ENCODE measurements at regions of chr17 and their contacts with region 1.

Region 1: DNA sequence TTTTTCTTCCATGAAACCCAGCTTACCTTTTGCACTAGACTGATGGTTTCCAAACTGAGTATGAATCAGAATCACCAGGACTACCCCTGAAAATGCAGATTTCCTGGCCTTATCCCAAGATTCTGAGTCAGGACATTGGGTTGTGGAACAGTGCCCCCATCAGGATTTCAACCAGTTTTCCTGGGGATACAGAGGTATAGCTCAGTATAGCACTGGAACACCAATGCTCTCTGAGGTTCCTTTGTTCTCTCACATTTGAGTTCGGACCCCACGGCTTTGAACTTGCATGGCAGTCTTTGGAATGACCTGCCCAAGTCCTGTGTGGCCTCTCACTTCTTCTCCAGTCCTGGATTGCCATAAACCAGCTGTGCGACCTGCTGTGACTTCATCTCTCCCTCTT is 12.8 kb upstream of the CCL8 start:
- DNase-seq: no peak
- ATAC-seq: peak; percentile 80 to 90
- H3K4me3 ChIP-seq: no peak overlapping the region
- H3K27ac ChIP-seq: no peak overlapping the region
- H3K4me1 ChIP-seq: peaks cover 2% of the 10 kb centered on the region
- H3K27me3 ChIP-seq: no peaks in the 10 kb centered on the region

Region 2: GRCh38 chr17:34199932-34200534 is 106.4 kb before region 1 on chr17:
- intact Hi-C with region 1: loop called (anchors 2 to 5 kb)
- DNase-seq: peak; percentile 56 to 77 (median 66)
- ATAC-seq: peak; percentile 93 to 94
- H3K4me3 ChIP-seq: no peak overlapping the region
- H3K27ac ChIP-seq: no peak overlapping the region
- H3K4me1 ChIP-seq: no peaks in the 10 kb centered on the region
- H3K27me3 ChIP-seq: no peaks in the 10 kb centered on the region

Region 3: GRCh38 chr17:34235389-34236028 is 71.0 kb before region 1 on chr17:
- intact Hi-C with region 1: loop called in 1 of 4 experiments (anchors 10 kb)
- DNase-seq: peak; percentile 74 to 90 (median 87)
- ATAC-seq: peak; percentile 90 to 93
- H3K4me3 ChIP-seq: no peak overlapping the region
- H3K27ac ChIP-seq: peak overlapping the region; percentile 46
- H3K4me1 ChIP-seq: peaks cover 31% of the 10 kb centered on the region
- H3K27me3 ChIP-seq: no peaks in the 10 kb centered on the region

Region 4: GRCh38 chr17:34254651-34255380 is 51.6 kb before region 1 on chr17 and contains the start of gene CCL2:
- intact Hi-C with region 1: loop called in 1 of 4 experiments (anchors 5 kb)
- DNase-seq: peak; percentile 80 to 91 (median 80)
- ATAC-seq: peak; percentile 76 to 79
- H3K4me3 ChIP-seq: peak within 1 kb of the TSS; percentile 36
- H3K27ac ChIP-seq: peak within 1 kb of the TSS; percentile 84
- H3K4me1 ChIP-seq: peaks cover 39% of the 10 kb centered on the region
- H3K27me3 ChIP-seq: no peaks in the 10 kb centered on the region
- total RNA-seq, gene CCL2: 24.7 to 211 (median 51.7) TPM

Region 5: DNA sequence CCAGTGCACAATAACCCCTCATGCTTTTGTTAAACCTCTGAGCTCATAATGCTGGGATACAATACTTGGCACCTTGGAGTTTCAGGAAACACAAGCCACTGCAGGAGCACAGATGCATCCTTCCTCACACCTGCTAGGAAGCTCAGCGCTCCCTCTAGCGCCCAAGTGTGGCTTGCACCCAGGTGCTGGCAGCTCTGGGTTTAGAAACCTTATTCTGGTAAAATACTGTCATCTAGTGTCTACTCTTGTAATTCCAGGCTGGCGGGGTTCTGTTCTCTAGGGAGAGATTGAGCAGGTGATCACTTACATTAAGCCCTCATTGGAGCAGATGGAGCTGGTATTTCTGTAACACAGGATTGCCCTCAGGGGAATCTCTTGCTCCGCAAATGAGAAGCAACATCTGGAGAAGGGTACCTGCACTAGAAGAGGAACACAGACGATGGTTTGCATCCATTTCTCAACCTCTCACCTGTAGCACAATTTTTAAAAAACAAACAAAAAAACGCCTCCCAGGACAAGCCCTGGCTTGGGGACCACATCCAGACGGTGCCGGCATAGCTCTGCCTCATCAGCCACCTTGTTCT is 55.1 kb after region 1 on chr17:
- intact Hi-C with region 1: loop called in 2 of 4 experiments (anchors 2 to 10 kb)
- DNase-seq: peak; percentile 88 to 96 (median 95)
- ATAC-seq: peak; percentile 86 to 88
- H3K4me3 ChIP-seq: no peak overlapping the region
- H3K27ac ChIP-seq: no peak overlapping the region
- H3K4me1 ChIP-seq: no peaks in the 10 kb centered on the region
- H3K27me3 ChIP-seq: no peaks in the 10 kb centered on the region

Region 6: GRCh38 chr17:35214631-35215273 is 908.3 kb after region 1 on chr17:
- intact Hi-C with region 1: no loop called
- DNase-seq: no peak
- ATAC-seq: no peak
- H3K4me3 ChIP-seq: no peak overlapping the region
- H3K27ac ChIP-seq: peak overlapping the region; percentile 31
- H3K4me1 ChIP-seq: no peaks in the 10 kb centered on the region
- H3K27me3 ChIP-seq: no peaks in the 10 kb centered on the region